Body of pancreas (tissue), 4 donors: ENCODE measurements at regions of chr15 and their contacts with region 1.

Region 1: DNA sequence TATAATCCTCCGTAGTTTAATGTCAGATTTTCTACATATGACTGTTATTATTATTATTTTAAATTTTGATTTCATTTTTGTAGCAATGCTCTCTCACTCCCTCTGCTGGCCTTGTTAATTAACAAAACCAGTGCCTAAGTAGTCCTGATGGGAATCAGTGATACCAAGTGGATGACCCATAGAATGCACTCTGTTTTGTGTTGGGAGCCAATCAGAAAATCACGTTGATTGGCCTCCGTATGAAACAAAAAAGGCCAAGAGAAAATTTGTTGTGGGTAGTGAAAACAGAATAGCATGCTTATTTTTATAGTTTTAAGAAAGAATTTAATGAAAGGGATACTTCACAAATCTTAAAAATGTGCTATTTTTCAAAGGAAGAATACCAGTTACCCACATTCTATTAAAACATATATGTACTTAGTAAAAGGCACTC is 34.4 kb upstream of the MEIS2 start:
- DNase-seq: peak; percentile 15 to 27 (median 18)
- ATAC-seq: peak; percentile 35
- H3K4me3 ChIP-seq: no peak overlapping the region
- H3K27ac ChIP-seq: no peak overlapping the region
- H3K4me1 ChIP-seq: no peaks in the 10 kb centered on the region
- H3K27me3 ChIP-seq: no peaks in the 10 kb centered on the region
- CTCF ChIP-seq: peak; percentile 31 to 81 (median 78)
- POLR2A ChIP-seq: no peak

Region 2: DNA sequence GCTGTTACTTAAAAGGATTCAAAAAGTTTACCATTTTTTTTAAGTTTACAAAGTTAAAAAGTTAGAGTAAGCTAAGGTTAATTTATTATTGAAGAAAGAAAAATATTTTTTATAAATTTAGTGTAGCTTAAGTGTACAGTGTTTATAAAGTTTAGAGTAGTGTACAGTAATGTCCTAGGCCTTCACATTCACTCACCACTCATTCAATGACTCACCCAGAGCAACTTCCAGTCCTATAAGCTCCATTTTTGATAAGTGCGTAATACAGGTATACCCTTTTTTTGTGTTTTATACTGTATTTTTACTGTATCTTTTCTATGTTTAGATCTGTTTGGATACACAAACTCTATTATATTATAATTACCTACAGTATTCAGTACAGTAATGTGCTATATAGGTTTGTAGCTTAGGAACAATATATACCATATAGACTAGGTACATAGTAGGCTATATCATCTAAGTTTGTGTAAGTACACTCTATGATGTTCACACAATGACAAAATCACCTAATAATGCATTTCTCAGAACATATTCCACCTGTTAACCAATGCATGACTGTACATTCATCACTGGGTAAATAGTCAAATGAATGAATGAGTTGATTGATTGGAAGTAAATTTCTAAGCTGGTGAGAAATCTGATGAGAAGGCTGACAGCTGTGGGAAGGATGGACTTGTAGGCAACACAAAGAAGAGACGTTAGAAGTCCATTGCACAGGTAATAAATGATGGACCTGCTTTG is 650.5 kb before region 1 on chr15:
- intact Hi-C with region 1: loop called (anchors 10 kb)
- DNase-seq: no peak
- ATAC-seq: no peak
- H3K4me3 ChIP-seq: no peak overlapping the region
- H3K27ac ChIP-seq: no peak overlapping the region
- H3K4me1 ChIP-seq: no peaks in the 10 kb centered on the region
- H3K27me3 ChIP-seq: no peaks in the 10 kb centered on the region
- CTCF ChIP-seq: no peak
- POLR2A ChIP-seq: no peak

Region 3: GRCh38 chr15:36883713-36884517 is 250.8 kb before region 1 on chr15:
- intact Hi-C with region 1: loop called (anchors 5 kb)
- DNase-seq: peak; percentile 88 to 92 (median 88)
- ATAC-seq: peak; percentile 82
- H3K4me3 ChIP-seq: no peak overlapping the region
- H3K27ac ChIP-seq: no peak overlapping the region
- H3K4me1 ChIP-seq: peaks cover 14% of the 10 kb centered on the region
- H3K27me3 ChIP-seq: peaks cover 7 to 24% of the 10 kb centered on the region in 2 donors
- CTCF ChIP-seq: peak; percentile 83 to 91 (median 86)
- POLR2A ChIP-seq: no peak